Thyroid gland (tissue), 4 donors: ENCODE measurements at regions of chr5 and their contacts with region 1.

Region 1: DNA sequence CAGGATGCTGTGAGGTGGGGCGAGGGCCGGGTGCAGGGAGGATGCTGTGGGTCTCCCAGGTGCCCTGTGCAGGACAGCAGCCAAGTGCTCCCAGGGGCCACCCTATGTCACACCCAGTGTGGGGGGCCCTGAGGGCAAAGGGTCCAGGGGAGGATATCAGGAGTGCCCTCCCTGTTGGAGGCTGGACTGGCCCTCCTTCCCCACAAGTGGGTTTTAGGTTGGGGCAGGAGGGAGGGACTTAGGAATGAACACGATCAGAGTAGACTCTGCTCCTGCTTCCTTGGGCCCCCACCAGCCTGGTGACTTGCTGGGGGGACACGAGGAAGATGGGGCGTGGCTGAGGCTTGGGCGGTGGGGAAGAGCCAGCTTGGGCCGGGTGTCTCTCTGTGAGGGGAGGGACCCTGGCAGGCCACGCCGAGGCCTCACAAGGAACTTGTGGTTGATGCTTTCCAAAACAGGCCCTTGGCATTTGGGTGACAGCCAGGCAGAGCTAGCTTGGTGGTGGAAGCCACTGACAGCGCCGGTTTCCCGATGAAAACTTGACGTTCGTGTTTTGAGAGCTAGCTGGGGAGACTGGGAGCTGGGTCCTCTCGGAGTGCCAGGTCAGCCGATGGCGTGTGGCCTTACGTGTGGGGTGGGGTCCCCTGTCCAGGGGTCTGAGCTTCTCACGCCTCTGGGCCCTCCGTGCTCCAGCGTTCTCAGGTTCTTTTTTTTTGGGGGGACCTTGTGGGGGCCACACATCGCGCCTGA is 129.0 kb upstream of the LPCAT1 start:
- DNase-seq: peak in 1 of 2 donors; percentile 47
- H3K4me3 ChIP-seq: no peak overlapping the region
- H3K27ac ChIP-seq: no peak overlapping the region
- H3K4me1 ChIP-seq: peaks cover 0 to 3% of the 10 kb centered on the region in 2 donors
- H3K27me3 ChIP-seq: no peaks in the 10 kb centered on the region
- CTCF ChIP-seq: no peak
- POLR2A ChIP-seq: no peak

Region 2: GRCh38 chr5:912280-913091 is 740.3 kb before region 1 on chr5:
- intact Hi-C with region 1: loop called (anchors 10 kb)
- DNase-seq: no peak
- H3K4me3 ChIP-seq: no peak overlapping the region
- H3K27ac ChIP-seq: no peak overlapping the region
- H3K4me1 ChIP-seq: no peaks in the 10 kb centered on the region
- H3K27me3 ChIP-seq: no peaks in the 10 kb centered on the region
- CTCF ChIP-seq: no peak
- POLR2A ChIP-seq: no peak

Region 3: GRCh38 chr5:1217596-1218206 is 435.1 kb before region 1 on chr5:
- intact Hi-C with region 1: loop called (anchors 10 kb)
- DNase-seq: peak in 1 of 2 donors; percentile 12
- H3K4me3 ChIP-seq: no peak overlapping the region
- H3K27ac ChIP-seq: no peak overlapping the region
- H3K4me1 ChIP-seq: no peaks in the 10 kb centered on the region
- H3K27me3 ChIP-seq: no peaks in the 10 kb centered on the region
- CTCF ChIP-seq: no peak
- POLR2A ChIP-seq: no peak

Region 4: GRCh38 chr5:1709171-1709803 is 56.5 kb after region 1 on chr5:
- intact Hi-C with region 1: no loop called
- DNase-seq: peak; percentile 60 to 66
- H3K4me3 ChIP-seq: no peak overlapping the region
- H3K27ac ChIP-seq: peak overlapping the region in 1 of 3 donors; percentile 52
- H3K4me1 ChIP-seq: peaks cover 0 to 18% of the 10 kb centered on the region in 2 donors
- H3K27me3 ChIP-seq: no peaks in the 10 kb centered on the region
- CTCF ChIP-seq: no peak
- POLR2A ChIP-seq: no peak

Region 5: GRCh38 chr5:1737790-1738405 is 85.1 kb after region 1 on chr5:
- intact Hi-C with region 1: no loop called
- DNase-seq: no peak
- H3K4me3 ChIP-seq: no peak overlapping the region
- H3K27ac ChIP-seq: no peak overlapping the region
- H3K4me1 ChIP-seq: no peaks in the 10 kb centered on the region
- H3K27me3 ChIP-seq: no peaks in the 10 kb centered on the region
- CTCF ChIP-seq: peak in 2 of 6 experiments; percentile 15 to 31
- POLR2A ChIP-seq: no peak